Heart right ventricle (tissue), 16 donors: ENCODE measurements at regions of chr2 and their contacts with region 1.

Region 1: DNA sequence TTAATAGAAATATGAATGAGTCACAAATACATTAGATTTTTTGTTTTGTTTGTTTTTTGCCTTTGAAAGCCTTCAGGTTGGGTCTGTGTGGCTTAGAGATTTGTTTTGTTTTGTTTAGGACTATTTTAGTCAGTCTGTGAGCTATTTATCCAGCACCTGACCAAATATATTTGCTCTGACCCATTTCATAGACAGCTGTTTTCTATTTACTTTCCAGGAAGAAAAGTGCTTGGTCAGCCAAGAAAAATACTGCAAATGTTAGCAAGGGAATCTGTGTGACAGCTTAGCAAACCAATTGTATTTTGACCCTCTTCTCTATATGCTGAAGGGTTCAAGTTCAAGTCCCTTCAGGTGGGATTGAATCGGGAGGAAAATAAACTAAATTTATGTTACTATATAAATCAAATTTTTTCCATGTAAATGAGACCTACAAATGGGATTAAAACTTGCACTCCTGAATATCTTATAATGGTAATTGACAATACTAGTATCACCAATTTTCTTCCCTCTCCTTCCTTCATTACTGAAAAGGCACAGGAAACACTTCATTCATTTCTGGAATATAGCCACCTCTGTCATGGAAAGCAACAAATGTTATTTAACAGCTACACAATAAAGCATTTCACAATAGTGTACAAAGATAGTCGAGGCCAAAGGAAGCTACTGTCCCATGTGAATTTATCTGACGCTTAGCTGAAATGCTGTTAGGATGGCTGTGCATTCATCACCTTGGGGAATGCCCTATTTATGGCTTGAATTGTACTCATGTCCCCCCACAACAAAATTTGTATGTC is 23.1 kb upstream of the KLF7 start:
- DNase-seq: no peak
- ATAC-seq: peak in 4 of 8 donors; percentile 21 to 73 (median 45)
- H3K4me3 ChIP-seq: no peak overlapping the region
- H3K27ac ChIP-seq: no peak overlapping the region
- H3K4me1 ChIP-seq: peaks cover 0 to 10% (median 0%) of the 10 kb centered on the region in 9 donors
- H3K27me3 ChIP-seq: no peaks in the 10 kb centered on the region
- CTCF ChIP-seq: no peak

Region 2: DNA sequence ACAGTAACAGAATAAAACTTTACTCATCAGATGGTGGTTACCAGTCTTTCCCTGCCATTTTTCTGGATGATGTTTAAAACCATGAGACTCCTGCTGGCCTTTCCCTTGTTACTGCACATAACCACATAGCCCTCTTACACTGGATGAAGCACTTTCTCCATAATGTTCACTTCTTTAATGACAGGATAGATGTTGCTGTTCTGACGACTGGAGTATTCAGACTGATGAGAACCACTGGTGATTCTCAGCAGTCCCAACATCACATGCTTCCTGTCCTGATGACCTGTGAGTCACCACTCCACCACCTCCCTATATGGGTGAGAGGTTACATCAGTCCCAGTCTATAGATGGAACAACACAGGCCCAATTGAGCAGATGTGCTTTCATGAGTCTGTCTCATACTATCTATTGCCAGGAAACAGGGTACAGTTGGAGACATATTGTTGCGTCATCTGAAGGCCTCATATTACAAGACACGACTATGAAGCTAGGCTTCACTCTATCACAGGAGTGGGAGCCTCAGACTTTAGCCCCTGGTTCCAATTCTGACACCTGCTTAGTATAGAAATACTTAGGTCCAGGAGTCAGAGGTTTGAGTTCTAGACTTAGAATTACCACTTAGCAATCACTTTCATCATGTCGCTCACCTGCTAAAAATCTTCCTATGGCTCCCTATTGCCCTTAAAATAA is 122.6 kb after region 1 on chr2:
- intact Hi-C with region 1: loop called in 1 of 10 experiments (anchors 10 kb)
- DNase-seq: peak in 1 of 2 donors; percentile 14
- ATAC-seq: peak; percentile 61 to 98 (median 90)
- H3K4me3 ChIP-seq: no peak overlapping the region
- H3K27ac ChIP-seq: peak overlapping the region in 5 of 10 donors; percentile 7 to 81 (median 21)
- H3K4me1 ChIP-seq: peaks cover 0 to 24% (median 12%) of the 10 kb centered on the region in 9 donors
- H3K27me3 ChIP-seq: no peaks in the 10 kb centered on the region
- CTCF ChIP-seq: peak in 5 of 9 donors; percentile 16 to 44 (median 37)